OCI-LY7 (cell line): ENCODE measurements at regions of chr5 and their contacts with region 1.

Region 1: DNA sequence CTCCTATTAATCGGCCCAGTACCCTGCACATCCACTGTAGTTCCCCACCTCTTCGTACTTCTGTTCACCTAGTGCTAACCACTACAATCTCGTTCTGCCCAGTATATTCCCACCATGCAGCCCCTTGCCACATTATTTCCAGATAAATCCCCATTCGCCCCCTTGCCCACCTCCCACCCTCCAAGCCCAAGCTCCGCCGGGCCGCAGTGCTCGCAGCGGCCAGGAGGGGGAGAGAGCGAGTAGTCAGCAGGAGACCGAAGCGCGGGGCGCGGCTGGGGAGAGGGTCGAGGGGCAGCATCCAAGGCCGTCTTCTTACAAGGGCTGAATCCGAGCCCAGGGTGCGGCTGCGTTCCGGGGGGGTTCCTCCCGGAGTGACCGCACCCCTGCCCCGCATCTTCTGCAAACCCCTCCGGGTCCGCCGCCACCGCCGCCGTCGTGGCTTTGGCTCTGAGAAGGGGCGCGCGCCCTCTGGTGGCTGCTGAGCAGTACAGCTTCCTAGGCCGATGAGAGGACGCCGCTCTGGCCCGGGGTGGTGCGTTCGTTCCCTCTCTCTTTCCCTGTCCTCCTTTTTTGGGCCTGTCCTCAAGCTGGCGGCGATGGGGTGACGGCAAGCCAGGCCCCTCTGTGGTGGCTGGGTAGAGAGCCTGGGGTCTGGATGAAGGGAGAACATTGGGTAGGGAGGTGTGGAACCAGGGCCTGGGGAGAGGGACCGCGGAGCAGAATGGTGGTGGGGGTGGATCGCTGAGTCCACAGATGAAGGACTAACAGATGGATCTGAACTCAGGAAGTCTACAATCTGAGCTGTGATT is 30.0 kb upstream of the PSD2 start:
- DNase-seq: peak; percentile 84
- H3K4me3 ChIP-seq: peak overlapping the region; percentile 69
- H3K27ac ChIP-seq: no peak overlapping the region
- H3K4me1 ChIP-seq: peaks cover 20% of the 10 kb centered on the region
- CTCF ChIP-seq: peak; percentile 97

Region 2: DNA sequence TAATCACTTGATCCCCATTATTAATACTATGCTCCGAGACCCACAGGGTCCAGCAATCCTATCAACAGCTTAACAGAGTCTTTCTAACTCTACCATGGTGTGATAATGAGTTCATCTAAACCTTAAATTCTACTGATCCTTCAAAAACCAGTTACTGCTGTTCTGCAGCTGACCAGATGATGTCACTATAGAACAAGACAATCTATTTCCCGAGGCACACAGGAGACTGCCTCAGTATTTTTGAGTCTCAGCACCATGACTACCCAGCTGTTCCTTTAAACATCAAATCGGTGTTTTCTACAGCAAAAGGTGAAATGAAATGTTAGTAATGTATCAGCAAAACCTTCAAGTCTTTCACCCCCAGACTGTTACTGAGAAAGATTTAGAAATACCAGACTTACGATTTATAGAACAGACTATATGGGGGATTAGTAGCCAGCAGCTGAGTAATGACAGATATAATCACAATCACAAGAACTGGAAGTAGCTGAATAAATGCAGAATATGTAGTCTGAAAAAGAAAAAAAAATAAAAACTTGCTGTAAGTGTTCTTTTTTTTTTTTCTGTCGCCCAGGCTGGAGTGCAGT is 343.2 kb before region 1 on chr5:
- CTCF ChIA-PET with region 1: no interaction called
- POLR2A ChIA-PET with region 1: no interaction called
- intact Hi-C with region 1: loop called (anchors 1 kb)
- DNase-seq: peak; percentile 79
- H3K4me3 ChIP-seq: no peak overlapping the region
- H3K27ac ChIP-seq: no peak overlapping the region
- H3K4me1 ChIP-seq: no peaks in the 10 kb centered on the region
- CTCF ChIP-seq: peak; percentile 99